ENCODE measurements at regions of chr4 and their contacts with region 1.

Region 1: GRCh38 chr4:94680176-94680862 is 77.4 kb upstream of the BMPR1B start:
- DNase-seq: no peak
- H3K4me3 ChIP-seq: no peak overlapping the region
- H3K27ac ChIP-seq: no peak overlapping the region
- H3K4me1 ChIP-seq: peaks cover 4% of the 10 kb centered on the region
- H3K27me3 ChIP-seq: no peaks in the 10 kb centered on the region
- CTCF ChIP-seq: no peak

Region 2: DNA sequence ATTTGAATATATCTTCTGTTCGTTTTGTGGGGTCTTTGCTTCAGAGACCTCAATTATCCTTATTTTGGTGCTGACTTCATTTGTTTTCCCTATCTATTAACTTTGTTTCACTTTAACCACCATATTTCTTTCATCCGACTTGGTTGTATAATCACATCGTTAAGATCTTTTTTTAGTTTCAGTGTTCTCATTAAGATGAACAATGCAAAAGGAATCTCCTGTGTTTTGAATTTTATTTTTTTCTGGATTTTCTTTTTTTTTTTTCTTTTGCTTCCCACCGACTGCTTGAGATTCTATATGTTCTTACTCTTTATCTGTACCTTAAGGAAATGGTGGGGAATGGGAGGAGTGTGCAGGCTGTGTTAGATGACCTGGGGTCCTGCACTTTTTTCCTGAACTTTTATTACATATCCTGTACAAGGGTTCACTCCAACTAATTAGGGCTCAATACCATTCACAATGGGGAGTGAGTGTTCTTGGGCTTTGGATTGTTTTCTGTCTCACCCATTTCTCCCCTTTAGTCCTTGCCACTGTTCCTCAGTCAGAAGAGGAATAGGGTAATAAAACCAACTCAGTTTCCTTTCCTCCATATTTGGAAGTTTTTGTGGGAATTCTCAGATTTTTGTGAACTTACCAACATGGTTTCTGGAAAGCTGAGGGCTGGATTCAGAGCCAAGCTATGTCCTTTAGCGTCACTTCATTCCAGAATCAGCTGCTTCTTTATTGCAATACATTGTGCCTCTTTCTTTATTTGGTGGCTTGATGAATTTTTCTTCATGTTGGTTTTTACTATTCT is 34.2 kb after region 1 on chr4:
- CTCF ChIA-PET with region 1: no interaction called
- dilution Hi-C with region 1: no loop called
- in situ Hi-C with region 1: no loop called
- intact Hi-C with region 1: loop called (anchors 5 kb)
- DNase-seq: no peak
- H3K4me3 ChIP-seq: no peak overlapping the region
- H3K27ac ChIP-seq: no peak overlapping the region
- H3K4me1 ChIP-seq: no peaks in the 10 kb centered on the region
- H3K27me3 ChIP-seq: no peaks in the 10 kb centered on the region
- CTCF ChIP-seq: no peak